PC-3 (cell line): ENCODE measurements at regions of chr7 and their contacts with region 1.

Region 1: GRCh38 chr7:146090023-146090645 is 26.5 kb upstream of the CNTNAP2 start:
- DNase-seq: peak; percentile 67
- ATAC-seq: peak; percentile 78
- H3K4me3 ChIP-seq: no peak overlapping the region
- H3K27ac ChIP-seq: no peak overlapping the region
- H3K4me1 ChIP-seq: no peaks in the 10 kb centered on the region
- H3K27me3 ChIP-seq: peaks cover 10% of the 10 kb centered on the region; the same call in 1 of the 2 replicates
- CTCF ChIP-seq: peak; percentile 88

Region 2: DNA sequence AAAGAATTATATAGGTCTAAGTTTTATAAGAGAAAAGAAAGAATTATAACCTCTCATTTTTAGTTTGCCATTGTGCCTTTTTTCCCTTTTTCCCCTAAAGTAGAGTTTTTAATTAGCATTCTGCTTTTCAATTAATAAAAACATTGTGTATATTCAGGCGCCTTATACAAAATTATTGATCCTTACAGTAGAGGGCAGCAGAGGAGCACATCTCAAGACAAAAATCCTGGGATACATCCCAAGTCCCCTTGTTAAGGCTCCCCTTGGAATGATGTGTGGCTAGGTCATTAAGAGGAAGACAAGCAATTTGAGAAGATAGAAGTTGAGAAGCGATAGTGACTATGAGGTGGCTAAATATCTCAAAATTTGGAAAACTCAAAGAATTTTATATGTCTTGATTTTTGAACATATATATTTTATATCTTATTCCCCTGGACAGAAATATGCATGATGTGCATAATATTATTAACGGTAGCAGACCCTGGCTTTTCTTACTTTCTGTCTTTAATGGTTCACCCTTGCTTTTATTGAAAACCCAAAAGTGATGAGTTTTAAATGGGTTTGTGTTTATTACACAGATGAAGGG is 1235.2 kb before region 1 on chr7:
- CTCF ChIA-PET with region 1: interaction called, 3 read pairs
- POLR2A ChIA-PET with region 1: no interaction called
- intact Hi-C with region 1: loop called (anchors 1 kb)
- DNase-seq: peak; percentile 53
- ATAC-seq: peak; percentile 65
- H3K4me3 ChIP-seq: no peak overlapping the region
- H3K27ac ChIP-seq: no peak overlapping the region
- H3K4me1 ChIP-seq: no peaks in the 10 kb centered on the region
- H3K27me3 ChIP-seq: peaks cover 37% of the 10 kb centered on the region
- CTCF ChIP-seq: peak; percentile 70

Region 3: DNA sequence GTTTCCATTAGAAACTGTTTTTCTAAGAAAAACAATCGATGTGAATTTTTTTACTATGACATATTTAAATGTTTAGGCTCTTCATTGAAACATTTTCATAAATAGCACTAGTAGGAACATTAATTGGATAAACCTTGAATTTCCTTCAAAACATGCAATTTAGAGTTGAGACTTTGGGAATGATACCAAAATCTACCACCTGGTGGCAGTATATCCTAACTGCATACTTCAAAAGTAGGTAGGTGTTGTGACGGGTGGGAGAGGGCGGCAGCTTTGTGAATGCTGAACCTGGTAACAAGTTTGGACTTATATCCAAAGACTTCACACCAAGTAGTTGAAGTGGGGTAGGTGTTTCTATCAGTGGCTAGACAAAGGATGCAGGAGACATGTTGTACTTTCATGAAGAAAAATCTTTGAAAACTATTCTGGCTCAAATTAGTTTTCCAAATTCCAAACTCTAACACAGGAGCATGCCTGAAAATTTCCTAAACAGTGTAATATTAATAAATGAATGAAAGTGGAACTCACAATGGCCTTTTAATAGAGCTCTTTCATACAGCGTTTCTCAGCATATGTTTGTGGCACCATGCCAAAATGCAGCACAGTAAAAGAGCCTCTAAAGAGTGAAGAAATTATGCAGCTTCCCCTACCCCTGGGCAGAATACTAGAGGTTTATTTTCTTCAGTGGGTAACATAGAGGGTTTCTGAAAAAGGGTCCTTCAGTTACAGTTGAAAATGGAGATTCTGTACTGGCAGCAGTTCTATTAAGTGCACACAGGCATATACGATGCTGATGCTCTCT is 1053.3 kb before region 1 on chr7:
- CTCF ChIA-PET with region 1: no interaction called
- POLR2A ChIA-PET with region 1: no interaction called
- intact Hi-C with region 1: loop called (anchors 1 kb)
- DNase-seq: peak; percentile 75
- ATAC-seq: peak; percentile 73; the same call in 1 of the 2 replicates
- H3K4me3 ChIP-seq: no peak overlapping the region
- H3K27ac ChIP-seq: no peak overlapping the region
- H3K4me1 ChIP-seq: no peaks in the 10 kb centered on the region
- H3K27me3 ChIP-seq: peaks cover 27% of the 10 kb centered on the region
- CTCF ChIP-seq: peak; percentile 92

Region 4: DNA sequence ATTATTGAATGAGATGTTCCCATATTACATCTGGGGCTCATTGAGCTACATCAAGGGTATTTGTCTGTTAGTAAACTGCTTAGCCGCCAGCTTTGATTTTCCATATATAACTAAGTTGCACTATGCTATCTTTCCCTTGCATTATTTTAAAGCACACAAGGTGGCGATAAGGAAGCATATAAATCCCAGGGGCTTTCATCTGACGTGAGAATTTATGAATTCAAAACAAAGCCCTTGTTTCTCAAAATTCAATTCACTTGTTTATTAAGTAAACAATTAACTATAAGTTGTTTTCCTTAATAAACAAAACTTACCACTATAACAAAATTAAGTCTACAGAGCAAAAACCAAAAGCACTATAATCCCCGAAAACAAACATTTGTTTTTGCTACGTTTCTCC is 920.2 kb before region 1 on chr7:
- CTCF ChIA-PET with region 1: no interaction called
- POLR2A ChIA-PET with region 1: no interaction called
- intact Hi-C with region 1: loop called (anchors 1 kb)
- DNase-seq: peak; percentile 46
- ATAC-seq: peak; percentile 48; the same call in 1 of the 2 replicates
- H3K4me3 ChIP-seq: no peak overlapping the region
- H3K27ac ChIP-seq: no peak overlapping the region
- H3K4me1 ChIP-seq: no peaks in the 10 kb centered on the region
- H3K27me3 ChIP-seq: peaks cover 10% of the 10 kb centered on the region
- CTCF ChIP-seq: peak; percentile 61

Region 5: GRCh38 chr7:145655666-145656065 is 434.5 kb before region 1 on chr7:
- CTCF ChIA-PET with region 1: no interaction called
- POLR2A ChIA-PET with region 1: no interaction called
- intact Hi-C with region 1: loop called (anchors 5 kb)
- DNase-seq: no peak
- ATAC-seq: no peak
- H3K4me3 ChIP-seq: no peak overlapping the region
- H3K27ac ChIP-seq: no peak overlapping the region
- H3K4me1 ChIP-seq: peaks cover 8% of the 10 kb centered on the region
- H3K27me3 ChIP-seq: no peaks in the 10 kb centered on the region
- CTCF ChIP-seq: no peak

Region 6: DNA sequence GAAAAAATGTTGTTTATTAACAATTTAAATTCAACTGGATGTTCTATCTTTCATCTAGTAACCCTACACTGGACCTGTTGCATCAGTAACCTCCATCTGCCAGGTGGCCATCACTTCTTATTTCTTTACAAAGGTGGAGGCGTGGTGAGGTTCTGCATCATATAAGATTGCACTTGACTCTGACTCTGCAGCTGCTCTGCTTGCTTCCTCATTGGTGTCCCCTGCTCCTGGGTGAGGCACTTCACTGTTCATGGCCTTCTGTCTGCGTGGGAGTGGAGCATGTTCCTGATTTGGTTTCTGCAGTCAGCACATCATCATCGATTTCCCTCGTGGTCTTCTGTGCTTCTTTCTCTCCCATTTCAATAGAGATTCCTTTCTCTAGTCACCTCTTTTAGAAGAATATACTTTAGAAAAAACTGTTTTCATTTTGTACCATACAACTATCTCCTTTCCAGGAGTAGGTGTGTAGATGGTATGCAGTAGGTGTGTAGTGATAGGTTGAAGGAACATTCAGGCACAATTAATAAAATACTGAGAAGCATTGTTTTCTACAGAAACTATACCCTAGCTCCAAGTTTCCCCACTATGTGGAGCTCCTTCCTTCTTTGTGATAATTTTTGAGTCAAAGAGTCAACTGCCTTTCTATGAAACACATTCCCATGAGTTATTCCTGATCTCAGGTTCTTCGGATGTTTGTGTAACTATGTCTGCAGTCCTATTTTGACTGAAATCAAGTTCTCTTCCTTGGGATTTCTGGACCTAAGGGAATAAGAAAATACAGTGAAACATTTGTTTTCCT is 205.2 kb before region 1 on chr7:
- CTCF ChIA-PET with region 1: no interaction called
- POLR2A ChIA-PET with region 1: no interaction called
- intact Hi-C with region 1: loop called (anchors 1 kb)
- DNase-seq: no peak
- ATAC-seq: no peak
- H3K4me3 ChIP-seq: no peak overlapping the region
- H3K27ac ChIP-seq: no peak overlapping the region
- H3K4me1 ChIP-seq: no peaks in the 10 kb centered on the region
- H3K27me3 ChIP-seq: no peaks in the 10 kb centered on the region
- CTCF ChIP-seq: 0 out of 2 replicates have a peak, but pooled peaks have one; percentile 22

Region 7: DNA sequence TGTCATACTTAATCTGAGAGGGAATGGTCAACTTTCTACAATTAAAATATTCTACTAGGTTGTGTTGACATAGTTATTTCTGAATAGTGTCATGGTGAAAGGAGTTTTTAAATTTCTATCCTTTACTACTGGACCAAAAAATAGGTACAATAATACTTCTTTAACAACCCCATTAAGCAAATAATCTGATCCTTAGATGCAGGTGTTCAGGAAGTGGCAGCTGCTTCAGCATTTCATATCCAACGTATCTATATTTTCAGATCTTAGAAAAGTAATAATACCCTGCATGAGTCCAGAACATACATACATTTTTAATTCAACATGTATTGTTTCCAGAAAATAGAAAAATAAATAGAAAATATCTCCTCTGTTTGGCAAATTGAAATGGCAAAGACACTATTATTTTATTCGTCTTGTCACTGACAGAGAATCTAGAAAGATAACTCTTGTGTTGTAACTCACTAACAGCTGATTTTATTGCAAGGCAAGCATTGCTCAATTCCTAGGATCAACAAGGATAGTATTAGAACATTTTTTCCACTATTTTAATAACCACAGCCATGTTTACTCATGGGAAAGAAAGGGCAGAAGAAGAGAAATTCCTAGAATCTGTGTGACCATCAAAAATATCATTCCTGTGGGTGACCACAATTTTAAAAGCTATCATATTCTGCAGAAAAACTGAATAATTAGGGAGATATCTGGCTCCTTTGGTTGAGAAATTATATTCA is 132.8 kb before region 1 on chr7:
- CTCF ChIA-PET with region 1: no interaction called
- POLR2A ChIA-PET with region 1: no interaction called
- intact Hi-C with region 1: no loop called
- DNase-seq: no peak
- ATAC-seq: no peak
- H3K4me3 ChIP-seq: no peak overlapping the region
- H3K27ac ChIP-seq: no peak overlapping the region
- H3K4me1 ChIP-seq: no peaks in the 10 kb centered on the region
- H3K27me3 ChIP-seq: no peaks in the 10 kb centered on the region
- CTCF ChIP-seq: no peak